GM10248 (cell line): ENCODE measurements at regions of chr13 and their contacts with region 1.

Region 1: DNA sequence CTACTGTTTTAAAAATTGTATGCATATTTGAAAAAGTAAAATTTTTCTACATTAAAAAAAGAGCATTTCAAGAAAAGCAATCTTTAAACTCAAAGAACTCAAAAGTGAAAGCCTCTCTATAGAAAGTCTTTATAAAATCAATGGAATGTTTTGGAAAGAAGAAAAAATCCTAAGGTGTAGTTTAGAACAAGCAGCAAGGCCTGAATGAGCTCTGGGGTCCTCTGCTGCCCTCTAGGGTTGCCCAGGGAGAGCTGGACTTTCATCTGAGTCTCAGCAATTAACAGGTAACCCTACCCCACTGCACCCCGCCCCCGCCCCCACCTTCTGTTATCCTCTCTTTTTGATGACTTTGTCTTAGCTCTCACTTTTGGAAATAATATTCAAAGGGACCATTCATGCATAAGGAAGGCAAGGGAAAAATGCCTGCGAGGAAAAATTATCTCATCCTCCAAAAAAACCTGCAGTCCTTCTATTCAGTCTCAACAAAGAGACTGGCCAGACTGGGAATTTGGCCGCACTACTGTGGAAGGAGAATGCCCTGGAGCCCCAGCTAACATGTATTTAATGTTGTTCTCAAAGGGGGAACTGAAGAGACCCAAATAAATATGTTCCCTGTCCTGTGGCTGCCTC is 24.1 kb downstream of the SLC25A30 start:
- DNase-seq: peak; percentile 59
- CTCF ChIP-seq: peak; percentile 56

Region 2: DNA sequence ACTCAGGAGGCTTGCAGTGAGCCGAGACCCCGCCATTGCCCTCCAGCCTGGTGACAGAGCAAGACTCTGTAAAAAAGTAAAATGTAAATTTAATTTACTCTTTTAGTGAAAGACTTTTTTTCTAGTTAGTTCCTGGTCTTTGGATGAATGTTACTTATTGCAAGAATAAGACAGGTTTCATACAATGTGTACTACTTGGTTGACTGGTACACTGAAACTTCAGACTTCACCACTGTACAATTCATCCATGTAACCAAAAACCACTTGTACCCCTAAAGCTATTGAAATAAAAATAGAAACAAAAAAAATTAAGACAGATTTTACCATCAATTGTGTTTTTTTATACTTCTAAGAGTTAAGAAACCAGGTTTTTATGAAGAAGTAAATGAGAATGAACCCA is 369.2 kb before region 1 on chr13:
- CTCF ChIA-PET with region 1: no interaction called
- POLR2A ChIA-PET with region 1: no interaction called
- DNase-seq: no peak
- CTCF ChIP-seq: no peak

Region 3: DNA sequence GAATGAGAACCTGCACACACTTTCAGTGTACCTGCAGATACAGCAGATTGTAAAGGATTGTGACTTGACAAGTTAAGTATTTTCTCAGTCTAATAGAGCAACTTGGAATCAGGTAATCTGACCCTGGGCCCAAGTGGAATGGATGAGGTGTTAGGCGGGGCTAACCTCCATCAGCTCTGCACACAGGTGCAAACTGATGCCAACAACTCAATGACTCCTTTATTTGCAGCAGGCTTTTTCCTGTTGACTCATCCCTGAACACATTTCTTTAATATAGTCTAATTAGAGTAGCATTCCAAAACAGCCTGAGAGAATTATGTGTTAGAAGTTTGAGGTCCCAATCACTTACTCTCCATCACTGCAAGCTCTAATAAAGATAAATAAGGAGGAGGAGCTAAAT is 101.9 kb before region 1 on chr13:
- CTCF ChIA-PET with region 1: no interaction called
- POLR2A ChIA-PET with region 1: no interaction called
- DNase-seq: no peak
- CTCF ChIP-seq: no peak

Region 4: DNA sequence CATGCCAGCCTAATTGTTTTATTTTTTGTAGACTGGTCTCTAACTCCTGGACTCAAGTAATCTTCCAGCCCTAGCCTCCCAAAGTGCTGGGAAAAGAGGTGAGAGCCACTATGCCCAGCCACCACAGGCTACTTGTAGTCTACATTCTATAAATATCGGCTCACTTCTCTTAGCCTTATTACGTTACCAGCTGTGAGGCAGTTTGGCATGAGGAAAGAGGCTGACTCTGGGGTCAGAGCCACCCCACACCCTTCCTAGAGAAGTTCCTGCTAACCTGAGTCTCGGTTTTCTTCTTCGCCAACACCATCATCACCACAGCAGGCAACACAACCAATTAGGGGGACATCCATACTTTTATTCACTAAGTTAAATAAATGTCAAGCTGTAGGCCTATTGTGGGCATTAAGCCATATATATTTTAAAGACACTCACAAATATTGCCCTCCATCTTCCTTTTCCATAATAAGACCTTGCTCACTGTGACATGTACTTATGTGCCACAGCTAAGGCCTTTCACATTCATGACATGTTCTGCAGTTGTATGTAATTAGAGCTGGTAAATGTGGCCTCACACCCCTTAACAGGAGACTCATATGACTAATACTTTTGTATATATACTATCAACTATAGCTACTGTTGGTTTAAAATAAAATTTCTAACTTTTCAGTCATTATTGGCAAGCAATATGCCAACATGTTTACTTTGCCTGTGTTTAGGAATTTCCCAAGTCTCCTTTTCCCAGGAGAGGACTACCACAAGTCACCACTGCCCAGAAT is 18.4 kb after region 1 on chr13:
- CTCF ChIA-PET with region 1: interaction called, 41 read pairs
- POLR2A ChIA-PET with region 1: no interaction called
- DNase-seq: no peak
- CTCF ChIP-seq: no peak

Region 5: GRCh38 chr13:45417790-45418534 is 23.9 kb after region 1 on chr13 and contains the start of gene SLC25A30:
- CTCF ChIA-PET with region 1: interaction called, 14 read pairs
- POLR2A ChIA-PET with region 1: interaction called, 6 read pairs
- DNase-seq: peak; percentile 92
- CTCF ChIP-seq: no peak

Region 6: GRCh38 chr13:45748941-45749759 is 355.1 kb after region 1 on chr13:
- CTCF ChIA-PET with region 1: no interaction called
- POLR2A ChIA-PET with region 1: no interaction called
- DNase-seq: no peak
- CTCF ChIP-seq: no peak